ENCODE measurements at regions of chr16 and their contacts with region 1.

Region 1: DNA sequence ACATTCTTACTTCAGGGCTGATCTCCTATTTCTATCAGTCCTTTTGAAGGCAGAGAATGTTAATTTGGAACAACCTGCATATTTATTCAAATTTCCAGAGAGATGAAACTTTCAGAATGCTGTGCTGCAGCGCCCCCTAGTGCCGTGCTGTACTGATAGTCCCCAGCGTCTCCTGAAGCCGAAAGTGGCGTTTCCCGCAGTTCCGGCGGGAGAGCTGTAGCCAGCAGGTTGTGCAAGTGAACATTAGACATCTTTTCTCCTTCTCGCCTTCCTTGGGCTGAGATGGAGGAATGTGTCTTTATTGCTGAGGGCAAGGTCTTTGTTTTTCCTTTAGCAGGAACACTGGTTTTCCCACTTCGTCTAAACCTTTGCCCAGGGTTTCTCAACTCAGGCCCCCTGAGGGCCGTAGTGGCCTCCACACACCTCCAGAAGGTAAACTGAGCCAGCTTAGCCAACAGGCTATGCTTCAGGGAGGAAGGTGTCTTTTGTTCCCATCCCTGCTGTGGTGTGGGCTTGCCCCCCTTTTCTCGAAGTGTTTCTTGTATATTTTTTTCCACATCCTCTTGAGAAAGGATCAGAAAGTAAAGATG is 26.4 kb downstream of the USP10 start:
- DNase-seq: peak; percentile 66 to 81
- ATAC-seq: peak; percentile 56 to 78
- H3K4me3 ChIP-seq: no peak overlapping the region
- H3K27ac ChIP-seq: peak overlapping the region in 1 of 4 donors; percentile 1
- H3K4me1 ChIP-seq: peaks cover 44 to 45% of the 10 kb centered on the region in 2 donors
- H3K27me3 ChIP-seq: no peaks in the 10 kb centered on the region
- CTCF ChIP-seq: peak; percentile 87 to 94 (median 90)
- POLR2A ChIP-seq: no peak

Region 2: DNA sequence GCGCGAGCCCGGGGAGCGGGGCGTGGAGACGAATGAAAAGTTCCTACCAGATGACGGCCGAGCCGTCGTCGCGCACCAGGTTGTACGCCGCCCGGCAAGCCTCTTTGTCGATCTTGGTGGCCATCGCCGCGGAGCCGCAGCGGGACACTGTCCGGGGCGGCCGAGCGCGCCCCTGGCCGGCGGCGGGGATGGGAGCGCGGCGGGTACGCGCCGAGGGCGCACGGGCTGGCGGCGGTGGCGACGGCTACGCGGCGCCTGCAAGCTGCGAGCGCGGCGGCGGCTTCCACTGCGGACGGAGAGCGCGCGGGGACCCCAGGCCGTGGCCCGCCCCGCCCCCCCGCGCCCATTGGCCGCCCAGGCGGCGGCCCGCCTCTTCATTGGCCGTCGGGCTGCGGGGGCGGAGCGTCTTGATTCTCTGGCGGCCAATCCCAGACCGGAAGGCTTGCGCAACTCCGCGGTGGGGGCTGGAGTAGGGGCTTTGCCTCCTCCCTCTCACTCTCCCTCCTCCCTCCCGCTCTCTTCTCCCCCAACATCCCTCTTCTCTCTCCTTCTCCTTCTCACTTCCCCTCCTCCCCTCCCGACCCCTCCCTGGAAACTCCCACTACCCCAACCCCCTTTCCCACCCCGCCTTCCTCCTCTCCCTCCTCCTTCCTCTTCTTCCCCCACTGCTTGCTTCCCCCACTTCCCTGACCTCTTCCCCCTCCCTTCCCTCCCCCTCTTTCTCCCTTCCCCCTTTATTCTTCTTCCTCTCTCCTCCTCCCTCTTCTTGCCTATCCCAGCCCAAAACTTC is 108.2 kb before region 1 on chr16 and contains the start of gene COTL1:
- in situ Hi-C with region 1: loop called in 2 of 4 experiments (anchors 5 to 10 kb)
- intact Hi-C with region 1: loop called (anchors 2 kb)
- DNase-seq: peak; percentile 84 to 89
- ATAC-seq: peak; percentile 80 to 87
- H3K4me3 ChIP-seq: peak within 1 kb of the TSS; percentile 56 to 81 (median 68)
- H3K27ac ChIP-seq: peak within 1 kb of the TSS in 3 of 4 donors; percentile 44 to 54 (median 52)
- H3K4me1 ChIP-seq: peaks cover 12 to 14% of the 10 kb centered on the region in 2 donors
- H3K27me3 ChIP-seq: peaks cover 25 to 30% (median 26%) of the 10 kb centered on the region in 3 donors
- CTCF ChIP-seq: no peak
- POLR2A ChIP-seq: peak; percentile 62 to 81
- total RNA-seq, gene COTL1: 2.8 to 8.7 (median 6.2) TPM

Region 3: GRCh38 chr16:84672276-84673202 is 53.6 kb before region 1 on chr16:
- in situ Hi-C with region 1: loop called (anchors 5 to 10 kb)
- intact Hi-C with region 1: loop called (anchors 1 kb)
- DNase-seq: peak; percentile 40 to 63
- ATAC-seq: peak; percentile 78 to 93
- H3K4me3 ChIP-seq: no peak overlapping the region
- H3K27ac ChIP-seq: no peak overlapping the region
- H3K4me1 ChIP-seq: no peaks in the 10 kb centered on the region
- H3K27me3 ChIP-seq: no peaks in the 10 kb centered on the region
- CTCF ChIP-seq: peak; percentile 79 to 94 (median 90)
- POLR2A ChIP-seq: no peak